ENCODE measurements at regions of chr19 and their contacts with region 1.

Region 1: GRCh38 chr19:12672744-12673143 is 6.1 kb downstream of the WDR83 start:
- DNase-seq: no peak
- H3K4me3 Mint-ChIP-seq: no peak overlapping the region
- H3K27ac Mint-ChIP-seq: no peak overlapping the region
- H3K4me1 Mint-ChIP-seq: peaks cover 19% of the 10 kb centered on the region
- H3K27me3 Mint-ChIP-seq: no peaks in the 10 kb centered on the region

Region 2: DNA sequence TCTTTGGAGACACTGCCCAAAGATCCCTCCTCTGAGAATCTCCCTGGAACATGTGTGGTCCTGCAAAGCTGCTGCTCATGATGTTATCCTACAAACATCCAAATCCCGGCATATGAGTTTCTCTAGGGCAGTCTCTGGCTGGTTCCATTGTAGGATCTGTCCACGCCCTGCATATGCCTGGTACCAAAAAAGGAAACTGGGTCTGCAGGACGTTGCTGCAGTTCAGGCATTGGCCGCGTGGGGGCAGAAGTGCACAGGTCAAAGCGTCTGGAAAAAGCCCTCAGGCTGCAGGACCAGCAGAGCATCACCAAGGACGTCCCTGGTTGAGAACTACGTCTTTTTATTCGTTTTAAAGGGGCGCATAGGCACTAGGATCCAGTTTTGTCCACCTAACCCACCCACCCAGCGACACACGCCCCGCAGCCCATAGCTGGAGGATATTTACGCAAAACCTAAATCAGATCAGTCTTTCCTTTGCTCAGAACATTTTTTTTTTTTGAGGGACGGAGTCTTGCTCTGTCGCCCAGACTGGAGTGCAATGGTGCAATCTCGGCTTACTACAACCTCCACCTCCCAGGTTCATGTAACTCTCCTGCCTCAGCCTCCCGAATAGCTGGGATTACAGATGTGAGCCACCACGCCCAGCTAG is 108.6 kb before region 1 on chr19:
- intact Hi-C with region 1: loop called (anchors 1 kb)
- DNase-seq: peak; percentile 85
- H3K4me3 Mint-ChIP-seq: no peak overlapping the region
- H3K27ac Mint-ChIP-seq: no peak overlapping the region
- H3K4me1 Mint-ChIP-seq: peaks cover 4% of the 10 kb centered on the region
- H3K27me3 Mint-ChIP-seq: no peaks in the 10 kb centered on the region

Region 3: GRCh38 chr19:12647490-12648071 is 25.2 kb before region 1 on chr19:
- intact Hi-C with region 1: no loop called
- DNase-seq: no peak
- H3K4me3 Mint-ChIP-seq: peak overlapping the region; percentile 13
- H3K27ac Mint-ChIP-seq: no peak overlapping the region
- H3K4me1 Mint-ChIP-seq: no peaks in the 10 kb centered on the region
- H3K27me3 Mint-ChIP-seq: no peaks in the 10 kb centered on the region

Measured in activated T-helper 2 cell treated with anti-CD3 and anti-CD28 coated beads, Interferon-gamma antibody, Interleukin-2, Interleukin-4, amounts not matched to agents 10 μg/mL and 5 μg/mL and 100 μg/mL, durations not matched to agents 14 hours and 24 hours and 36 hours (primary cell).